Activated CD4-positive, alpha-beta T cell treated with anti-CD3 and anti-CD28 coated beads, Interleukin-2, amount 10 ng/mL, durations not matched to agents 7 days and 5 days (primary cell): ENCODE measurements at regions of chr12 and their contacts with region 1.

Region 1: DNA sequence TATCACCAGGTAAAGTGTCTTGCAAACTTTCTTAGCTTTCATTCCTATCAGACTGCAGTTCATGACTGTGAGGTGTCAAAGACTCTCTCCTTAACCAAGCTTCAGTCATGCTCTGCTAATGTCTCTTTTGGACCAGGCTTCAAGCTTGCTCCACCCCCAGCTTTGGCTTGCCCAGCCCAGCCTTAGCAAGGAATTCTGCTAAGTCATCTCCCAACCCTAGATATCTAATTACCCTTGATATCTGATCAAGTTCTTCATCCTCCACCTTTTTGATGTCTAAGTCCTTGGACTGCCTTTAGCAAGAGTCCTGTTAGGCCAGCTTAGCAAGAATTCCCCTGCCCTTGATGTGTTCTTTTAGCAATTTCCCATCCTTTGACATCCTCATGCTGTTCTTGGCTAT is 108.9 kb upstream of the FGD4 start:
- DNase-seq: no peak
- H3K4me3 Mint-ChIP-seq: no peak overlapping the region
- H3K27ac Mint-ChIP-seq: no peak overlapping the region
- H3K4me1 Mint-ChIP-seq: no peaks in the 10 kb centered on the region
- H3K27me3 Mint-ChIP-seq: no peaks in the 10 kb centered on the region

Region 2: GRCh38 chr12:32166510-32166909 is 123.9 kb before region 1 on chr12:
- CTCF ChIA-PET with region 1: no interaction called
- POLR2A ChIA-PET with region 1: interaction called, 11 read pairs
- DNase-seq: no peak
- H3K4me3 Mint-ChIP-seq: no peak overlapping the region
- H3K27ac Mint-ChIP-seq: no peak overlapping the region
- H3K4me1 Mint-ChIP-seq: no peaks in the 10 kb centered on the region
- H3K27me3 Mint-ChIP-seq: no peaks in the 10 kb centered on the region